ENCODE measurements at regions of chr11 and their contacts with region 1.

Region 1: GRCh38 chr11:18495271-18495670 is 31.5 kb downstream of the TSG101 start:
- DNase-seq: no peak
- ATAC-seq: no peak
- H3K4me3 ChIP-seq: no peak overlapping the region
- H3K27ac ChIP-seq: no peak overlapping the region
- H3K4me1 ChIP-seq: peaks cover 9 to 14% of the 10 kb centered on the region in 2 donors
- H3K27me3 ChIP-seq: no peaks in the 10 kb centered on the region
- CTCF ChIP-seq: no peak
- POLR2A ChIP-seq: no peak

Region 2: GRCh38 chr11:18321980-18322711 is 173.1 kb before region 1 on chr11 and contains the starts of genes GTF2H1 and HPS5:
- in situ Hi-C with region 1: no loop called
- intact Hi-C with region 1: no loop called
- DNase-seq: peak; percentile 93 to 95
- ATAC-seq: peak; percentile 99 to 100
- H3K4me3 ChIP-seq: peak within 1 kb of the TSS; percentile 88 to 89 (median 88)
- H3K27ac ChIP-seq: peak within 1 kb of the TSS; percentile 95 to 99 (median 98)
- H3K4me1 ChIP-seq: peaks cover 31 to 37% of the 10 kb centered on the region in 2 donors
- H3K27me3 ChIP-seq: no peaks in the 10 kb centered on the region
- CTCF ChIP-seq: peak in 1 of 5 experiments; percentile 54
- POLR2A ChIP-seq: peak; percentile 53 to 81
- total RNA-seq, gene GTF2H1: 30.9 to 45.6 (median 33.2) TPM
- total RNA-seq, gene HPS5: 5.3 to 13.1 (median 9.7) TPM

Region 3: GRCh38 chr11:18459634-18460033 is 35.6 kb before region 1 on chr11:
- in situ Hi-C with region 1: no loop called
- intact Hi-C with region 1: loop called (anchors 1 kb)
- DNase-seq: no peak
- ATAC-seq: no peak
- H3K4me3 ChIP-seq: no peak overlapping the region
- H3K27ac ChIP-seq: no peak overlapping the region
- H3K4me1 ChIP-seq: no peaks in the 10 kb centered on the region
- H3K27me3 ChIP-seq: no peaks in the 10 kb centered on the region
- CTCF ChIP-seq: no peak
- POLR2A ChIP-seq: no peak